WTC11 (cell line): ENCODE measurements at regions of chr2 and their contacts with region 1.

Region 1: DNA sequence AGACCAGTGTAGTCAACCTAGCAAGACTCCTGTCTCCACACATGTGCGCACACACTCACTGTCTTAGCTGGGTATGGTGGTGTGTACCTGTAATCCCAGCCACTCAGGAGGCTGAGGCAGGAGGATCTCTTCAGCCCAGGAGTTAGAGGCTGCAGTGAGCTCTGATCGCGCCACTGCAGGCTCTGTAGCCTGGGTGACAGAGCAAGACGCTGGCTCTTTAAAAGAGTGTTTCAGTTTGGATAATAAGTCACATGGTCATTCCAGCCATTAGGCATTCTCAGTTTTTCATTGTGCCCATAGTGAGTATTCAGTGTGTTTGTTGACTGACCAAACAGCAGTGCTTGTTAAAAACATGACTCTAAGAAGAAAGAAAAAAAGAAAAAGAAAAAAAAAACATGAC is 31.0 kb downstream of the RAB10 start:
- DNase-seq: no peak
- ATAC-seq: no peak
- H3K4me3 Mint-ChIP-seq: no peak overlapping the region
- H3K27ac Mint-ChIP-seq: peak overlapping the region; percentile 71; the same call in 1 of the 2 replicates
- H3K4me1 Mint-ChIP-seq: peaks cover 33% of the 10 kb centered on the region
- H3K27me3 Mint-ChIP-seq: no peaks in the 10 kb centered on the region
- CTCF ChIP-seq: no peak

Region 2: DNA sequence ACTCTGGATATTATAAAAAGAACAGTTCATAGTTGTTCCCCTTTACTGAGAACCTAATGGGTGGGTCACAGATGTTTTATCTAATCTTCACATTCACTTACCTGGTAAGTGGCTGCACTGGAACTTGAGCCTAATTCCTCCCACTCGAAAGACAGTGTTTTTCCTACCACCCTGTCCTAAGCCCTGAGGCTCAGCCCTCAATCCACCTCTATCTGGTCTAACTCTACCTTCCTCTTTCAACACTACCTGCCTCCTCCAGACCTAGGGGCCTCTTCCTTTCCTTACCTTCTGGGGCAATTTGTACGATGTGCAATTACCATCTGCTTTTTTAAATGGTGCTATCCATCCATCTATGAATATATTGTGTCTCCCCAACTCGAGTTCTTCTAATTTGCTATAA is 72.9 kb before region 1 on chr2:
- CTCF ChIA-PET with region 1: interaction called, 11 read pairs
- POLR2A ChIA-PET with region 1: no interaction called
- DNase-seq: no peak
- ATAC-seq: no peak
- H3K4me3 Mint-ChIP-seq: no peak overlapping the region
- H3K27ac Mint-ChIP-seq: no peak overlapping the region
- H3K4me1 Mint-ChIP-seq: no peaks in the 10 kb centered on the region
- H3K27me3 Mint-ChIP-seq: no peaks in the 10 kb centered on the region; the same call in 1 of the 2 replicates
- CTCF ChIP-seq: no peak

Region 3: GRCh38 chr2:26075963-26076605 is 11.2 kb after region 1 on chr2:
- CTCF ChIA-PET with region 1: no interaction called
- POLR2A ChIA-PET with region 1: no interaction called
- DNase-seq: no peak
- ATAC-seq: no peak; the same call in 1 of the 2 replicates
- H3K4me3 Mint-ChIP-seq: no peak overlapping the region
- H3K27ac Mint-ChIP-seq: peak overlapping the region; percentile 63
- H3K4me1 Mint-ChIP-seq: peaks cover 37% of the 10 kb centered on the region
- H3K27me3 Mint-ChIP-seq: no peaks in the 10 kb centered on the region; the same call in 1 of the 2 replicates
- CTCF ChIP-seq: no peak

Region 4: GRCh38 chr2:26114151-26114550 is 49.3 kb after region 1 on chr2:
- CTCF ChIA-PET with region 1: no interaction called
- POLR2A ChIA-PET with region 1: no interaction called
- DNase-seq: no peak
- ATAC-seq: no peak
- H3K4me3 Mint-ChIP-seq: no peak overlapping the region
- H3K27ac Mint-ChIP-seq: no peak overlapping the region
- H3K4me1 Mint-ChIP-seq: peaks cover 3% of the 10 kb centered on the region
- H3K27me3 Mint-ChIP-seq: no peaks in the 10 kb centered on the region
- CTCF ChIP-seq: no peak

Region 5: GRCh38 chr2:26191316-26192159 is 126.7 kb after region 1 on chr2:
- CTCF ChIA-PET with region 1: no interaction called
- POLR2A ChIA-PET with region 1: no interaction called
- DNase-seq: no peak
- ATAC-seq: peak; percentile 21; the same call in 1 of the 2 replicates
- H3K4me3 Mint-ChIP-seq: no peak overlapping the region
- H3K27ac Mint-ChIP-seq: peak overlapping the region; percentile 38; the same call in 1 of the 2 replicates
- H3K4me1 Mint-ChIP-seq: 0 out of 2 replicates have a peak, but pooled peaks cover 3% of the 10 kb centered on the region
- H3K27me3 Mint-ChIP-seq: no peaks in the 10 kb centered on the region
- CTCF ChIP-seq: no peak